ENCODE measurements at regions of chr2 and their contacts with region 1.

Region 1: DNA sequence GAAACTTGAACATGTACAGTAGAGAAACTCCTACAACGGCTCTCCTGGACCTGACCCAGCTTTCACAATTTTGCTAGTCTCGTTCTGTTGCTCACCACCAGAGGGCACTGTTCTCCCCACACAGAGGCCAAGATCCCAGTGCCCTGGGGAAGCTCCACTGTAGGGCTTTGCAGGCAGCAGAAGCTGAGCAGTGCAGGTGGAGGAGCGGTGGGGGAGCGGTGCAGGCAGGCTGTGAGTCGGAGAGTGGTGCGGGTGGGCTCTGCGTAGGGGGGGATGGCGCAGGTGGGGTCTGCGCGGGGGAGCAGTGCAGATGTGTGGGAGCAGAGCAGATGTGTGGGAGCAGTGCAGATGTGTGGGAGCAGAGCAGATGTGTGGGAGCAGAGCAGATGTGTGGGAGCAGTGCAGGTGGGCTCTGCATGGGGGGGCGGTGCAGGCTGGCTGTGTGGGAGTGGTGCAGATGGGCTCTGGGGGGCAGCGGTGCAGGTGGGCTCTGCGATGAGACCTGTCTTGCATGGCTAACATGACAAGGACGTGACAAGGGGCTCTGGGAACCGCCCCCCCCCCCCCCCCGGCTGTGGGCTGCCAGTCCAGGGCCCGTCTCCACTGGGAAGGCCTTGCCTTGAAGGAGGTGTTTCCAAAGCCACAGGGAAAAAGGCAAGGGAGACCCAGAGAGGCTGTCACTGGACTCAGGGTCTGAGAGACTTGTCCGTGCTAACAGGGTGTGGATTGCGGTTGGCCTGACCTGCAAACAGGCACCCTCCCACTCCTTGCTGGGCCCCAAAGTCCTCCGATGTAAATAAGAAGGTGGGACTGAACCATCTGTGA is 7.3 kb downstream of the CYS1 start:
- DNase-seq: peak; percentile 90

Region 2: GRCh38 chr2:10097352-10098148 is 24.7 kb after region 1 on chr2:
- intact Hi-C with region 1: loop called (anchors 2 kb)
- DNase-seq: peak; percentile 90

Measured in cardiac septum (tissue), 1 donor.